CD8-positive, alpha-beta T cell (primary cell): ENCODE measurements at regions of chr2 and their contacts with region 1.

Region 1: DNA sequence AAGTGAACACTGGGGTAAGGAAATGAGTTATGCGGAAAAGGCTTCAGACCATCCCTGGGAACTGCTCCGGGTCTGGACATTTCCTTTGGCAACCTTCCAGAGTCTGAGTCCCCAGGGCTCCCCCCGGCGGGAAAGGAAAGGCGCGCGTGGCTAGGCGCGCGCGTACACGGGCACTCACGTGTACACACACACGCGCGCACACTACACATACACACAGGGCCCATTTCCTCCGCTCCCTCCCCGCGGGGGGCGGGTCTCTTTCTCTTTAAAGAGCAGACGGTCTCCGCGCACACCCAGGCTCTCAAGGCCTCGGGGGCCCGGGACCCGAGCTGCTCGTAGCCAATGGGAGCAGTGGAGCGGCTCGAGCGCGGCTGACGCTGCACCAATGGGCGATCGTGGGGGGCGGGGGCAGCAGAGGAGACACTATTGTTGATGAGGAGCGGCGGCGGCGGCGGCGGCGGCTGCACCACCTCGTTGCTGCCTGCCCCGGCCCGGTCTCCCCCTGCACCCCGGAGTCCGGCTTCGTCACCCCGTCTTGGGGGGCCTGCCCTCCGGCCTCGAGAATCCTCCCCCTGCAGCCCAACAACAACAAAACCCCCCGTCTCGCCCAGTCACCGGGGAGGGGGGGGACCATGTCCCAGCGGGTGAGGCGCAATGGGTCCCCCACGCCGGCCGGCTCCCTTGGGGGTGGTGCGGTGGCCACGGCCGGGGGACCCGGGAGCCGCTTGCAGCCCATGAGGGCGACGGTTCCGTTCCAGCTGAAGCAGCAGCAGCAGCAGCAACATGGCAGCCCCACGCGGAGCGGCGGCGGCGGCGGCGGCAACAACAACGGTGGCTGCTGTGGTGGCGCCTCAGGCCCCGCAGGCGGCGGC is at the start of gene FAM117B:
- DNase-seq: peak; percentile 97 to 99 (median 98)
- ATAC-seq: peak; percentile 87
- H3K4me3 ChIP-seq: peak within 1 kb of the TSS; percentile 77 to 87
- H3K4me3 Mint-ChIP-seq: peak within 1 kb of the TSS; percentile 98
- H3K27ac ChIP-seq: peak within 1 kb of the TSS; percentile 76 to 89
- H3K27ac Mint-ChIP-seq: peak within 1 kb of the TSS; percentile 99
- H3K4me1 ChIP-seq: peaks cover 29% of the 10 kb centered on the region
- H3K4me1 Mint-ChIP-seq: peaks cover 52% of the 10 kb centered on the region
- H3K27me3 ChIP-seq: no peaks in the 10 kb centered on the region
- H3K27me3 Mint-ChIP-seq: no peaks in the 10 kb centered on the region
- CTCF ChIP-seq: no peak
- total RNA-seq, gene FAM117B: 40.0 to 45.8 TPM

Region 2: DNA sequence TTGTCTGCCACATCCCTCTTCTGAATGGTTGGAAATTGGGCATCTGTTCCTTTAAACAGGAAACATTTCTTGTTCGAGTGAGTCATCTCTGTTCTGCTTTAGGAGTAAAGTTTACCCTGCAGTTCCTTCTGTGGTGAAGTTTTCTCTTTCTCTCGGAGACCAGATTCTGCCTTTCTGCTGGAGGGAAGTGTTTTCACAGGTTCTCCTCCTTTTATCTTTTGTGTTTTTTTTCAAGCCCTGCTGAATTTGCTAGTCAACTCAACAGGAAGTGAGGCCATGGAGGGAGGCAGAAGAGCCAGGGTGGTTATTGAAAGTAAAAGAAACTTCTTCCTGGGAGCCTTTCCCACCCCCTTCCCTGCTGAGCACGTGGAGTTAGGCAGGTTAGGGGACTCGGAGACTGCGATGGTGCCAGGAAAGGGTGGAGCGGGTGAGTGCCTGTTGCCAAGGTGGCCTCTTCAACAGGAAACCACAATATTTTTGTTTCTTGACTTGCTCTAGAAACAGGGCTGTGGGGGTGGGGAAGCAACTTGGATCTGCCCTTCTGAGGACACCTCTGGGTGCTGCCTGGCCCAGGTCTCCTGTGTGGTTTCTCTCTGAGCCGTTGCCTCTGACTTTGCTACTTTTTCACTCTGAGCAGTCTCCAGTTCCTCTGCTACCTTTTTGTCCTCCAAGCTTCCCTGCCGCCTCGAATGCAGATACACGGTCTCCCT is 1376.7 kb before region 1 on chr2:
- CTCF ChIA-PET with region 1: no interaction called
- POLR2A ChIA-PET with region 1: interaction called, 3 read pairs
- intact Hi-C with region 1: loop called in 1 of 2 experiments (anchors 10 kb)
- DNase-seq: peak; percentile 87 to 99 (median 94)
- ATAC-seq: peak; percentile 69
- H3K4me3 ChIP-seq: peak overlapping the region; percentile 45 to 48
- H3K4me3 Mint-ChIP-seq: peak overlapping the region; percentile 89
- H3K27ac ChIP-seq: peak overlapping the region; percentile 85 to 93
- H3K27ac Mint-ChIP-seq: peak overlapping the region; percentile 97
- H3K4me1 ChIP-seq: peaks cover 68% of the 10 kb centered on the region
- H3K4me1 Mint-ChIP-seq: peaks cover 75% of the 10 kb centered on the region
- H3K27me3 ChIP-seq: no peaks in the 10 kb centered on the region
- H3K27me3 Mint-ChIP-seq: no peaks in the 10 kb centered on the region
- CTCF ChIP-seq: no peak

Region 3: GRCh38 chr2:202588647-202589581 is 45.9 kb before region 1 on chr2:
- CTCF ChIA-PET with region 1: interaction called, 11 read pairs
- POLR2A ChIA-PET with region 1: interaction called, 11 read pairs
- intact Hi-C with region 1: loop called in 1 of 2 experiments (anchors 1 kb)
- DNase-seq: peak; percentile 41 to 87 (median 68)
- ATAC-seq: peak; percentile 99
- H3K4me3 ChIP-seq: no peak overlapping the region
- H3K4me3 Mint-ChIP-seq: no peak overlapping the region
- H3K27ac ChIP-seq: no peak overlapping the region
- H3K27ac Mint-ChIP-seq: no peak overlapping the region
- H3K4me1 ChIP-seq: peaks cover 4% of the 10 kb centered on the region
- H3K4me1 Mint-ChIP-seq: peaks cover 11% of the 10 kb centered on the region
- H3K27me3 ChIP-seq: no peaks in the 10 kb centered on the region
- H3K27me3 Mint-ChIP-seq: no peaks in the 10 kb centered on the region
- CTCF ChIP-seq: peak; percentile 80

Region 4: GRCh38 chr2:202671317-202672035 is 36.7 kb after region 1 on chr2:
- CTCF ChIA-PET with region 1: no interaction called
- POLR2A ChIA-PET with region 1: interaction called, 28 read pairs
- intact Hi-C with region 1: no loop called
- DNase-seq: no peak
- ATAC-seq: no peak
- H3K4me3 ChIP-seq: no peak overlapping the region
- H3K4me3 Mint-ChIP-seq: no peak overlapping the region
- H3K27ac ChIP-seq: no peak overlapping the region
- H3K27ac Mint-ChIP-seq: no peak overlapping the region
- H3K4me1 ChIP-seq: peaks cover 77% of the 10 kb centered on the region
- H3K4me1 Mint-ChIP-seq: peaks cover 74% of the 10 kb centered on the region
- H3K27me3 ChIP-seq: no peaks in the 10 kb centered on the region
- H3K27me3 Mint-ChIP-seq: no peaks in the 10 kb centered on the region
- CTCF ChIP-seq: no peak

Region 5: GRCh38 chr2:202870431-202871299 is 235.9 kb after region 1 on chr2:
- CTCF ChIA-PET with region 1: interaction called, 7 read pairs
- POLR2A ChIA-PET with region 1: interaction called, 5 read pairs
- intact Hi-C with region 1: loop called in 1 of 2 experiments (anchors 2 kb)
- DNase-seq: peak; percentile 31 to 80 (median 63)
- ATAC-seq: peak; percentile 79
- H3K4me3 ChIP-seq: peak overlapping the region; percentile 56 to 97
- H3K4me3 Mint-ChIP-seq: peak overlapping the region; percentile 97
- H3K27ac ChIP-seq: peak overlapping the region; percentile 48 to 60
- H3K27ac Mint-ChIP-seq: peak overlapping the region; percentile 83
- H3K4me1 ChIP-seq: no peaks in the 10 kb centered on the region
- H3K4me1 Mint-ChIP-seq: peaks cover 9% of the 10 kb centered on the region
- H3K27me3 ChIP-seq: no peaks in the 10 kb centered on the region
- H3K27me3 Mint-ChIP-seq: no peaks in the 10 kb centered on the region
- CTCF ChIP-seq: peak; percentile 69

Region 6: GRCh38 chr2:203706403-203706802 is 1071.6 kb after region 1 on chr2 and contains the start of gene CD28:
- CTCF ChIA-PET with region 1: no interaction called
- POLR2A ChIA-PET with region 1: no interaction called
- intact Hi-C with region 1: loop called in 1 of 2 experiments (anchors 10 kb)
- DNase-seq: peak; percentile 79 to 97 (median 89)
- ATAC-seq: peak; percentile 81
- H3K4me3 ChIP-seq: peak within 1 kb of the TSS; percentile 63 to 64
- H3K4me3 Mint-ChIP-seq: peak within 1 kb of the TSS; percentile 93
- H3K27ac ChIP-seq: peak within 1 kb of the TSS; percentile 82 to 83
- H3K27ac Mint-ChIP-seq: peak within 1 kb of the TSS; percentile 97
- H3K4me1 ChIP-seq: peaks cover 45% of the 10 kb centered on the region
- H3K4me1 Mint-ChIP-seq: peaks cover 53% of the 10 kb centered on the region
- H3K27me3 ChIP-seq: peaks cover 0 to 2% of the 10 kb centered on the region in 2 experiments
- H3K27me3 Mint-ChIP-seq: no peaks in the 10 kb centered on the region
- CTCF ChIP-seq: no peak
- total RNA-seq, gene CD28: 78.4 to 80.7 TPM